ENCODE measurements at regions of chr2 and their contacts with region 1.

Region 1: DNA sequence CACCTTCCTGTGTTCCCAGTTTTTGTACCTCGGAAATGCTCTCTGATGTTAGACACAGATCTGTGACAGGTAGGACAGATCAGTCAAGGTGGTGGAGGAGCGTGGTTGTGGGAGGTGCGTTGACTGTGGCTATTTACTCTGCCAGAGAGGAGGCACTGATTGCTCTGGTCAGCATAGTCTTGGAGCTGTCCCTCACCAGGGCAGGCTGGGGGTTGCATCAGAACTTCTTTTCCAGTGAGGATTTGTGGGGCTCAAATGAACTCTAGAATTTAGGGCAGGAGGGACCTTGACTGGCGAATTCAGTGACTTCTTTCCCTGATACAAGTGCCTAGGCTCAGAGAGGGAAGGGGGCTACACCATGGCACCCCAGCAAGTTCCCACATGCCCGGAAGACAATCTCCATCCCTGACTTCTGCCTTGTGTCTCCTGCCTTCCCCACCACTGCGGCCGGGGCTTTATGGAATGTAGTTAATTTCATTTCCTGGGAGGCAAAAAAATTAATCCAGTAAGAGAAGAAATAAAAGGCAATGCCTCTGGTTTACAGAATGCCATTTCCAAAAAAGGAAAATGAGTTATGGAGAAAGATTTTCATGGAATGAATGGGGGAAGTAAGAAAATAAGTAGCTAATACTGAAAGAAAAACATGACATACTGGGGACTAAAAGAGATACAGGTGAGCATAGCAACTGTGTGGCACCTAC is 26.1 kb downstream of the NIFK start:
- DNase-seq: no peak
- ATAC-seq: no peak

Region 2: GRCh38 chr2:121400201-121400600 is 310.4 kb before region 1 on chr2:
- intact Hi-C with region 1: loop called (anchors 10 kb)
- DNase-seq: no peak
- ATAC-seq: no peak